Calu3 (cell line): ENCODE measurements at regions of chr2 and their contacts with region 1.

Region 1: GRCh38 chr2:10225291-10226037 is 77.2 kb upstream of the HPCAL1 start:
- DNase-seq: no peak
- H3K4me3 Mint-ChIP-seq: no peak overlapping the region
- H3K27ac Mint-ChIP-seq: no peak overlapping the region
- H3K4me1 Mint-ChIP-seq: peaks cover 9% of the 10 kb centered on the region
- H3K27me3 Mint-ChIP-seq: peaks cover 69% of the 10 kb centered on the region
- CTCF ChIP-seq: no peak

Region 2: DNA sequence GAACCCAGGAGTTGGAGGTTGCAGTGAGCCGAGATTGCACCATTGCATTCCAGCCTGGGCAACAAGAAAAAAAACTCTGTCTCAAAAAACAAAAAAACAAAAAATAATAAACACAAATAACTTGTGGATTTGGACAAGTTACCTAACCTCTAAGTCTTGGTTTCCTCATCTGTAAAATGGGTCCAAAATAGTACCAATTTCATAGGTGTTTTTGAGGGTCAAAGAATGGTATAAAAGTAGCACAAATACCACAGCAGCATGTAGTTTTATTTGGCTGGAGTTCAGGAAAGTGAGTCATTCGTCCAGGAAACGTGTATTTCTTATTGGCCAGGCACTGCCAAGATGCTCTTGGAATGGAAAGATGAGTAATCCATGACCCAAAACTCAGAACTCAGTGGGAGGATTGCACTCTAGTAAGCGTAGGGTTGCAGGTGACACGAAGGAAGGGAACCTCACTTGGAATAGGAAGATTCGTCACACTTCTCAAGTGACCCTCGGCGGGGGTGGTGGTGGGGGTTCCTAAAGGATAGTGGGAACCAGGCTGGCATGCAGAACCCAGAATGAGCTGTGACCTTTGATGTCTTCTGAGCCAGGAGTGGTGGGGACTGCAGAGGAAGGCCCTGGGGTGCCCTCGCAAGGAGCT is 249.5 kb before region 1 on chr2:
- CTCF ChIA-PET with region 1: no interaction called
- intact Hi-C with region 1: no loop called
- DNase-seq: peak; percentile 52
- H3K4me3 Mint-ChIP-seq: peak overlapping the region; percentile 5
- H3K27ac Mint-ChIP-seq: peak overlapping the region; percentile 88
- H3K4me1 Mint-ChIP-seq: peaks cover 36% of the 10 kb centered on the region
- H3K27me3 Mint-ChIP-seq: no peaks in the 10 kb centered on the region
- CTCF ChIP-seq: no peak

Region 3: GRCh38 chr2:9990735-9991134 is 234.7 kb before region 1 on chr2:
- CTCF ChIA-PET with region 1: no interaction called
- intact Hi-C with region 1: no loop called
- DNase-seq: no peak
- H3K4me3 Mint-ChIP-seq: no peak overlapping the region
- H3K27ac Mint-ChIP-seq: no peak overlapping the region
- H3K4me1 Mint-ChIP-seq: no peaks in the 10 kb centered on the region
- H3K27me3 Mint-ChIP-seq: no peaks in the 10 kb centered on the region
- CTCF ChIP-seq: no peak

Region 4: DNA sequence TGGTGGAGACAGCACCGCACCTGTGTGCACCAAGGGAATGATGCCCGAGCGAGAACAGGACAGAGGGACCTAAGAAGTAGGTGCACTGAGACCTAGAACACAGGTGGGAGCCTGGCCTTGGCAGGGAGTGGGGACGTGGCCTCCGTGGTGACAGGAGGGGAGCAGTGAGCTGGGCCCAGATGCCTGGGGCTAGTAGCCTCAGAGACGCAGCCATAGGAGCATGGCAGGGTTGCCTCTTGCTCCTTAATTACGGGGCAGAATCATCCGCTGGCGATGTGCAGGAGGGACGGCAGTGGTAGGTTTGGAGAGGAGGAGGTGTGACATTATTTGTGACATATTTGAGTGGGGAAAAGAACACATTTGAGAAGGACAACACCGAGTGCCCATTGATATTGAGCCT is 20.2 kb after region 1 on chr2:
- CTCF ChIA-PET with region 1: interaction called, 11 read pairs
- intact Hi-C with region 1: no loop called
- DNase-seq: no peak
- H3K4me3 Mint-ChIP-seq: no peak overlapping the region
- H3K27ac Mint-ChIP-seq: no peak overlapping the region
- H3K4me1 Mint-ChIP-seq: no peaks in the 10 kb centered on the region
- H3K27me3 Mint-ChIP-seq: peaks cover 2% of the 10 kb centered on the region
- CTCF ChIP-seq: no peak